Dorsolateral prefrontal cortex (tissue), 120 donors: ENCODE measurements at regions of chr18 and their contacts with region 1.

Region 1: DNA sequence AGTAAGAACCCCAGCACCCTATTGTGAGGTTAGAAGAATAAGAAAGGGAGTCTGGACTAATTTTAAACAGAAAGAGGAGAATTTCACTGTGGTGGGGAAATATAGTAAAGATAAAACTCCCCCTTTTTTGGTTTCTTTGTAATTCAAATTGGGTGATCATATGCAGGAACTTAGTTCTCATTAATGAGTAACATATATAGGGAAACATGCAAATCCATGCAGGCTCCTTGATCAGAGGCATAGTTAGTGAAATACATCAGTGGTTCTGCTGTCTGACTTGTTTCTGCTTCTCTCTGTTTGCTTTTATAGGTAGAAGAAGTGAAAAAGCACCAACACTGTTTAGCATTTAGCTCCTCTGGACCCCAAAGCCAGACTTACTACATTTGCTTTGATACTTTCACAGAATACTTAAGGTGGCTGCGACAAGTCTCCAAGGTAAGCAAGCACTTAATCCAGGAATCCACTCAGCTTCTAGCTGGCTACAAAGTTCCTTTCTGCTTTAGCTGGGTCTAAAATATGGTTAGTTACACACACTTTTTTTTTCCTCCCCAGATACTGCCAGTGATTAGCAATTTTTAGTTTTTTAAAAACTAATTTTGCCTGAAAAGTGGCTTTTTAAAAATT is 123.2 kb downstream of the PHLPP1 start:
- DNase-seq: no peak
- H3K4me3 ChIP-seq: no peak overlapping the region
- H3K27ac ChIP-seq: peak overlapping the region in 18 of 59 donors; percentile 0 to 64 (median 24)
- H3K27me3 ChIP-seq: no peaks in the 10 kb centered on the region
- CTCF ChIP-seq: no peak

Region 2: GRCh38 chr18:62898359-62898758 is 59.8 kb after region 1 on chr18:
- intact Hi-C with region 1: loop called in 1 of 2 experiments (anchors 10 kb)
- DNase-seq: no peak
- H3K4me3 ChIP-seq: no peak overlapping the region
- H3K27ac ChIP-seq: peak overlapping the region in 35 of 59 donors; percentile 3 to 97 (median 38)
- H3K27me3 ChIP-seq: no peaks in the 10 kb centered on the region
- CTCF ChIP-seq: no peak